ENCODE measurements at regions of chr19 and their contacts with region 1.

Region 1: DNA sequence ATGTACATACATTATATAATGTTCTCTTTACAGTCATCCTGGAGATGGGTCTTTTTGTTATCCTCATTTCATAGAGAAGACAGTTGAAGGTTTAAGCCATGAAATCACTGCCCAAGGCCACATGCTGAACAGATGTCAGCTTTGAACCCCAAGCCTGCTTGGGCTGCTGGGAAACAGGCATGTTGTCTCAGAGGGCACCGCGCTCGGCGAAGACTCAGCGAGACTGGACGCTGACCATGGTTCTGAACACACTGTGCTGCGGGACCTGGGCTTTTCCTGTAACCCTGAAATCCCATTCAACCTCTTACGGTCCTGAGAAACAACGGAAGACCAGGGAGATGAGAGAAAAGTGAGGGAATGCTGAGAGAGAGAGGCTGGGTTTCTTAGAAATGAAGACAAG is 27.3 kb downstream of the LRFN3 start:
- DNase-seq: peak; percentile 63
- H3K4me3 ChIP-seq: no peak overlapping the region
- H3K27ac ChIP-seq: no peak overlapping the region
- H3K4me1 ChIP-seq: no peaks in the 10 kb centered on the region
- H3K27me3 ChIP-seq: no peaks in the 10 kb centered on the region
- CTCF ChIP-seq: no peak

Region 2: DNA sequence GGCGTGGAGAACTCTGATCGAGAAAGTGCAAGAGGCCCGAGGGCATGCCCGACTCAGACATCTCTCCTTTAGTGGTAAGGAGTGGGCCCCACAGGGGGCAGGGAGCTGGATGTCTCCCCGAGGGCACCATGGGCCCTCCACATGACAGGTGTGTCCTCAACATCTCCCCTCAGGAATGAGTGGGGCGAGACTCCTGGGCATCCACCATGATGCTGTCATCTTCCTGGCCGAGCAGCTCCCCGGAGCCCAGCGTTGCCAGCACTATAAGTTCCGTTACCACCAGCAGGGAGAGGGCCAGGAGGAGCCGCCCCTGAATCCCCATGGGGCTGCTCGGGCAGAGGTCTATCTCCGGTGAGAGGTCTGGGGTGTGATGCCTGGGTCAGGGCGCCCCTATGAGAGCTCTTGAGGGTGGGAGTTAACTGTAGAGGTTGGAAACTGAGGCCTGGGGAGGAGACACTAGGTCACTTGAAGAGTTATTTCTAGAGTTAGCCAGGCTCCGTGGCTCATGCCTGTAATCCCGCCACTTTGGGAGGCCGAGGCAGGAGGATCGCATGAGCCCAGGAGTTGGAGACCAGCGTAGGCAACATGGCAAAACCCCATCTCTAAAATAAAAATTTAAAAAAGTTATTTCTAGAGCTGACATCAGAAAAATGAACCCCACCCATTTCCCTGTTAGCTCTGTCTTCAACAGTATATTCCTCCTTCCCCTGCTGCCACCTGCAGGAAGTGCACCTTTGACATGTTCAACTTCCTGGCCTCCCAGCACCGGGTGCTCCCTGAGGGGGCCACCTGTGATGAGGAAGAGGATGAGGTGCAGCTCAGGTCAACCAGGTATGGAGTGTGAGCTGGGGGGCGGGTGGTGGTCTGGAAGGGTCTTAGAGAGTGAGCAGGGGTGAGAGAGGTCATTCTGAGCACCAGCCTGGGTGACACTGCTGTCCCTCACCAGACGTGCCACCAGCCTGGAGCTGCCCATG is 226.3 kb before region 1 on chr19:
- CTCF ChIA-PET with region 1: no interaction called
- POLR2A ChIA-PET with region 1: no interaction called
- intact Hi-C with region 1: no loop called
- DNase-seq: no peak
- H3K4me3 ChIP-seq: no peak overlapping the region
- H3K27ac ChIP-seq: no peak overlapping the region
- H3K4me1 ChIP-seq: no peaks in the 10 kb centered on the region
- H3K27me3 ChIP-seq: no peaks in the 10 kb centered on the region
- CTCF ChIP-seq: no peak

Region 3: DNA sequence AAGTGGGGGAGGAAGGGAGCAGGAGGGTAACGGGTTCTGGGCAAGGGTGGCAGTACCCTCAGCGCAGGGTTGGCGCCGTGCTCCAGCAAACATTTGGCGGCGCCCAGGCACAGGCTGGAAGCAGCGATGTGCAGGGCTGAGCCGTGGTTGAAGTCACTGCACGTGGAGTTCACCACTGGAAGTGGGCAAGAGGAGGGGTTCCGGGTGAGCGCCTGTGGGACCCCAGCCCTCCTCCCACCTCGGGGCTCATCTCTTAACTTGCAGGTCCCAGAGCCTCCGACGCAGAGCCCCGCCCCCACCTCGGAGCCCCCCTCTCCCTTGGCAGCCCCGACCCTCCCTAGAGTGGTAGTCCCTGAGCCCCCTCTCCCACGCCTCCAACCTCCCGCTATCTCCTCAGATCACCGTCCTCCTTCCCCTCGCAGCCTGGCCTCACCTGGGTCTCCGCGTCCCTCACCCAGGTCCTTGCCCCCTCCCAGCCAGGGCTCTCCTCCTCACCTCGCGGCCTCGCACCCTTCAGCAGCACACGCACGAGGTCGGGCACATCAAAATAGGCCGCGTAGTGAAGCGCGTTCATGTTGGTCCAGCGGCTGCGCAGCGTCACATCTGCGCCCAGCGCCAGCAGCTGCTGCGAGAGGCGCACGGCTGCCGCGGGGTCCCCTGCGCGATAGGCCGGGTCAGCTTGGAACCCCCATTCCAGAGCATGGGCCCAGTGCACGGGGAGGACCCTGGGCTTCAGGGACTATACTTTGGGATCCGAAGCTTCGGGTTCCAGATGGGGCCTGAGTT is 62.8 kb after region 1 on chr19:
- CTCF ChIA-PET with region 1: no interaction called
- POLR2A ChIA-PET with region 1: interaction called, 15 read pairs
- intact Hi-C with region 1: no loop called
- DNase-seq: no peak
- H3K4me3 ChIP-seq: no peak overlapping the region
- H3K27ac ChIP-seq: no peak overlapping the region
- H3K4me1 ChIP-seq: no peaks in the 10 kb centered on the region
- H3K27me3 ChIP-seq: no peaks in the 10 kb centered on the region
- CTCF ChIP-seq: no peak

Measured in A673 (cell line).